Activated naive CD4-positive, alpha-beta T cell treated with anti-CD3 and anti-CD28 coated beads for 36 hours (primary cell): ENCODE measurements at regions of chr4 and their contacts with region 1.

Region 1: GRCh38 chr4:163544407-163545038 is 50.0 kb downstream of the TMA16 start:
- DNase-seq: peak; percentile 72
- H3K4me3 Mint-ChIP-seq: no peak overlapping the region
- H3K27ac Mint-ChIP-seq: no peak overlapping the region
- H3K4me1 Mint-ChIP-seq: peaks cover 5% of the 10 kb centered on the region
- H3K27me3 Mint-ChIP-seq: no peaks in the 10 kb centered on the region

Region 2: GRCh38 chr4:162497564-162498167 is 1046.9 kb before region 1 on chr4:
- CTCF ChIA-PET with region 1: interaction called, 4 read pairs
- intact Hi-C with region 1: loop called (anchors 1 kb)
- DNase-seq: peak; percentile 12
- H3K4me3 Mint-ChIP-seq: no peak overlapping the region
- H3K27ac Mint-ChIP-seq: no peak overlapping the region
- H3K4me1 Mint-ChIP-seq: no peaks in the 10 kb centered on the region
- H3K27me3 Mint-ChIP-seq: peaks cover 8% of the 10 kb centered on the region

Region 3: GRCh38 chr4:163107754-163108153 is 436.8 kb before region 1 on chr4:
- CTCF ChIA-PET with region 1: interaction called, 3 read pairs
- intact Hi-C with region 1: loop called (anchors 2 kb)
- DNase-seq: no peak
- H3K4me3 Mint-ChIP-seq: no peak overlapping the region
- H3K27ac Mint-ChIP-seq: no peak overlapping the region
- H3K4me1 Mint-ChIP-seq: peaks cover 10% of the 10 kb centered on the region
- H3K27me3 Mint-ChIP-seq: no peaks in the 10 kb centered on the region

Region 4: GRCh38 chr4:163243297-163243981 is 301.1 kb before region 1 on chr4:
- CTCF ChIA-PET with region 1: no interaction called
- intact Hi-C with region 1: loop called (anchors 10 kb)
- DNase-seq: no peak
- H3K4me3 Mint-ChIP-seq: no peak overlapping the region
- H3K27ac Mint-ChIP-seq: no peak overlapping the region
- H3K4me1 Mint-ChIP-seq: peaks cover 2% of the 10 kb centered on the region
- H3K27me3 Mint-ChIP-seq: peaks cover 27% of the 10 kb centered on the region

Region 5: GRCh38 chr4:163484906-163485305 is 59.6 kb before region 1 on chr4:
- CTCF ChIA-PET with region 1: interaction called, 46 read pairs
- intact Hi-C with region 1: loop called (anchors 1 kb)
- DNase-seq: peak; percentile 67
- H3K4me3 Mint-ChIP-seq: no peak overlapping the region
- H3K27ac Mint-ChIP-seq: no peak overlapping the region
- H3K4me1 Mint-ChIP-seq: no peaks in the 10 kb centered on the region
- H3K27me3 Mint-ChIP-seq: peaks cover 13% of the 10 kb centered on the region

Region 6: DNA sequence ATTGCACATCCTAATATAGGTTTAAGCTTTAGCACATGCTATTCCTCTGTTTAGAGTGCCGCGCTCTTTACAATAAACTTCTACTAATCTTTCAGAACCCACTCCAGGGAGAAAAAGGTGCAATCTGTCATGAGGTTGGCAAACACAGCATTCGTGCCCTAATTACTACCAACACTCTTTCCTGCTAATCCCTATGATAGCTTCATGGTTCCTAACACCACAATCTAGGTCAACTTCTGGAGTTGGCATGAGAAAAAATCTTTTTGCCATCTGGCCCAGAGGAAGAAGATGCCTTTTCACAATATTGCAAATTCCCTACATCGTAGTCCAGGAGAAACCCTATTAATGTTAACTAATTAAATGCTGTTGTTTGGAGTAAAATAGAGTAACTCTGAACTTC is 10.5 kb before region 1 on chr4:
- CTCF ChIA-PET with region 1: interaction called, 13 read pairs
- intact Hi-C with region 1: no loop called
- DNase-seq: no peak
- H3K4me3 Mint-ChIP-seq: no peak overlapping the region
- H3K27ac Mint-ChIP-seq: no peak overlapping the region
- H3K4me1 Mint-ChIP-seq: no peaks in the 10 kb centered on the region
- H3K27me3 Mint-ChIP-seq: no peaks in the 10 kb centered on the region

Region 7: DNA sequence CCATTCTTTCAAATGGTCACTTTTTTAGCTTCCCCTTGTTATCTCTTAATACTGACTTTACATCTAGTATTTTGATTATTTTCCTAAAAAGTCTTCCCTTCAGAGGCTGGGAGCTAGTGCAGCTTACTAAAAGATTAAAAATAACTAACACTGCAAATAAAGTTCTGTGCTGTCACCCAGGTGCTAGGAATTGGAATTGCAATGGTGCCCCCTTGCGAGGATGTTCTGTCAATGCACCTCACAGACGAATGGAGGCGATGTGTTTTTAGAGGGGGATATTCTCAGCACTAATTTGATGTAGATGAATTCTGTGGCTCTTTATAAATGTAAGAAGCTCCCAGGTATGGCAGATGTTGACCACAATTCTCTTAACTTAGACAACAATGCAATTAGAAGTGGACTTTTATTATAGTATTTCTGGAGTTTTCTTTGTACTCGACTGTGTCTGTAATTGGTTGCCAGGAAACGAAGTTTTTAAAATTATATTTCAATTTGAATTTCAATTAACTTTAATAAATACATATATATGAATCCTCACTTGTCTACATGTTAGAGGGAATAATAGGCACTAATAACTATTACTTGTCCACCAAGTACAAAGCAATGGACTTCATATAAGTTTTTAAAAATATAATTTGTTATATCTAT is 1187.4 kb after region 1 on chr4:
- CTCF ChIA-PET with region 1: interaction called, 14 read pairs
- intact Hi-C with region 1: no loop called
- DNase-seq: peak; percentile 72
- H3K4me3 Mint-ChIP-seq: no peak overlapping the region
- H3K27ac Mint-ChIP-seq: no peak overlapping the region
- H3K4me1 Mint-ChIP-seq: peaks cover 6% of the 10 kb centered on the region
- H3K27me3 Mint-ChIP-seq: peaks cover 9% of the 10 kb centered on the region